Endothelial cell of umbilical vein (primary cell): ENCODE measurements at regions of chr5 and their contacts with region 1.

Region 1: GRCh38 chr5:68252673-68253623 is 37.4 kb downstream of the PIK3R1 start:
- DNase-seq: peak; percentile 73
- H3K4me3 ChIP-seq: no peak overlapping the region
- H3K27ac ChIP-seq: no peak overlapping the region
- H3K4me1 ChIP-seq: peaks cover 48% of the 10 kb centered on the region
- H3K27me3 ChIP-seq: no peaks in the 10 kb centered on the region
- CTCF ChIP-seq: peak; percentile 79 to 80
- POLR2A ChIP-seq: no peak

Region 2: DNA sequence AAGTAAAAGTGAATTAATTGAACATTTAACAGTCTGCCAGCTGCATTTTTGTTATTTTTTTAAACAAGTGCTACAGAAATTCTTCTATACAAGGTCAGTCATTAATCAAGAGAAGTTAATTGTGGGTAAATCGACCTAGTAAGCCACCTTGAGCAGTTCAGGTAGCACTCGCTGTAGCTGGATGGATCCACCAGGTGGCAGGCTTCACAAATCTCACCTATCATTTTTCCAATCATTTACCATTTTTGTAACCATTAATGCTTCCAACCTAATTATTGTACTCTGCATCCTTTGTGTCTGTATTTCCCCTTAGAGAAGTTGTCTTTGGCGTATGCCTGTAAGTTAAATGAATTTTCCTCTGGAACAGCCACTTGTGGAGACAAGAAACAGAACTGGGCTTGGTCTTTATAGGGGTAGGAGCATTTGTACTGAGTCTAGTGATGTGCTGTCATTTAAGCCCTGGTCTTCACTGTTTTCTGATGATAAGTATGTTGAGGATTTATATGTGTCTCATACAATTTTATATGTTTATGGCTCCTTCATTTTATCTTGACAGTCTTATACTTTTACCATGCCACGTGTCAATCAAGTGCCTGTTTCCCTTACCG is 1095.9 kb before region 1 on chr5:
- CTCF ChIA-PET with region 1: interaction called, 10 read pairs
- POLR2A ChIA-PET with region 1: no interaction called
- dilution Hi-C with region 1: loop called (anchors 25 kb)
- intact Hi-C with region 1: loop called (anchors 2 kb)
- DNase-seq: peak; percentile 37
- H3K4me3 ChIP-seq: no peak overlapping the region
- H3K27ac ChIP-seq: no peak overlapping the region
- H3K4me1 ChIP-seq: no peaks in the 10 kb centered on the region
- H3K27me3 ChIP-seq: no peaks in the 10 kb centered on the region
- CTCF ChIP-seq: peak; percentile 65 to 71
- POLR2A ChIP-seq: no peak

Region 3: GRCh38 chr5:67301285-67301903 is 951.6 kb before region 1 on chr5:
- CTCF ChIA-PET with region 1: interaction called, 3 read pairs
- POLR2A ChIA-PET with region 1: no interaction called
- dilution Hi-C with region 1: no loop called
- intact Hi-C with region 1: loop called (anchors 2 kb)
- DNase-seq: peak; percentile 88
- H3K4me3 ChIP-seq: no peak overlapping the region
- H3K27ac ChIP-seq: peak overlapping the region; percentile 90
- H3K4me1 ChIP-seq: peaks cover 56% of the 10 kb centered on the region
- H3K27me3 ChIP-seq: no peaks in the 10 kb centered on the region
- CTCF ChIP-seq: no peak
- POLR2A ChIP-seq: peak; percentile 20

Region 4: GRCh38 chr5:67493676-67494075 is 759.3 kb before region 1 on chr5:
- CTCF ChIA-PET with region 1: interaction called, 9 read pairs
- POLR2A ChIA-PET with region 1: no interaction called
- dilution Hi-C with region 1: no loop called
- intact Hi-C with region 1: loop called (anchors 5 kb)
- DNase-seq: peak; percentile 21
- H3K4me3 ChIP-seq: no peak overlapping the region
- H3K27ac ChIP-seq: no peak overlapping the region
- H3K4me1 ChIP-seq: no peaks in the 10 kb centered on the region
- H3K27me3 ChIP-seq: no peaks in the 10 kb centered on the region
- CTCF ChIP-seq: peak in 1 of 2 donors; percentile 16
- POLR2A ChIP-seq: no peak

Region 5: GRCh38 chr5:67910546-67910945 is 342.4 kb before region 1 on chr5:
- CTCF ChIA-PET with region 1: no interaction called
- POLR2A ChIA-PET with region 1: no interaction called
- dilution Hi-C with region 1: no loop called
- intact Hi-C with region 1: loop called (anchors 2 kb)
- DNase-seq: peak; percentile 60
- H3K4me3 ChIP-seq: no peak overlapping the region
- H3K27ac ChIP-seq: no peak overlapping the region
- H3K4me1 ChIP-seq: peaks cover 17% of the 10 kb centered on the region
- H3K27me3 ChIP-seq: no peaks in the 10 kb centered on the region
- CTCF ChIP-seq: no peak
- POLR2A ChIP-seq: no peak

Region 6: DNA sequence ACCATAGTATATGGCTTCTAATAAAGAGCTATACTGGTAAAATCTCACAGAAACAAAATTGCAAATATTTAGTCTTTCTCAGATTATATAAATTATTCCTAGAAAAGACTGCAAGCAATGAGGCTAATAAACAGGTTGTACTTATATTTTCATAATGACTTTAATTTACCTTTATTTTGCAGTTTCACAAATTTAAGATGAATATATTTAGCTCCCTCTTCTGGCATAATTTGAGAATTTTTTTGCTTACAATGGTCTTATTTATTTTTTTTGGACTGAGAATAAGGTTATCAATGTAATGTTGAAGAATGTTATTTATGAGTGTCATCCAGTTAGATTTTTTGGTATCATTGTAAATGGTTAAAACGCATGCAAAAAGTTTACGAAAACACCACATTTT is 19.3 kb after region 1 on chr5:
- CTCF ChIA-PET with region 1: interaction called, 18 read pairs
- POLR2A ChIA-PET with region 1: no interaction called
- dilution Hi-C with region 1: no loop called
- intact Hi-C with region 1: no loop called
- DNase-seq: peak; percentile 32
- H3K4me3 ChIP-seq: no peak overlapping the region
- H3K27ac ChIP-seq: no peak overlapping the region
- H3K4me1 ChIP-seq: no peaks in the 10 kb centered on the region
- H3K27me3 ChIP-seq: no peaks in the 10 kb centered on the region
- CTCF ChIP-seq: peak in 1 of 2 donors; percentile 15
- POLR2A ChIP-seq: no peak

Region 7: GRCh38 chr5:68505917-68506860 is 253.2 kb after region 1 on chr5:
- CTCF ChIA-PET with region 1: no interaction called
- POLR2A ChIA-PET with region 1: no interaction called
- dilution Hi-C with region 1: no loop called
- intact Hi-C with region 1: no loop called
- DNase-seq: no peak
- H3K4me3 ChIP-seq: no peak overlapping the region
- H3K27ac ChIP-seq: no peak overlapping the region
- H3K4me1 ChIP-seq: no peaks in the 10 kb centered on the region
- H3K27me3 ChIP-seq: no peaks in the 10 kb centered on the region
- CTCF ChIP-seq: no peak
- POLR2A ChIP-seq: no peak